Mammary epithelial cell (primary cell): ENCODE measurements at regions of chr7 and their contacts with region 1.

Region 1: DNA sequence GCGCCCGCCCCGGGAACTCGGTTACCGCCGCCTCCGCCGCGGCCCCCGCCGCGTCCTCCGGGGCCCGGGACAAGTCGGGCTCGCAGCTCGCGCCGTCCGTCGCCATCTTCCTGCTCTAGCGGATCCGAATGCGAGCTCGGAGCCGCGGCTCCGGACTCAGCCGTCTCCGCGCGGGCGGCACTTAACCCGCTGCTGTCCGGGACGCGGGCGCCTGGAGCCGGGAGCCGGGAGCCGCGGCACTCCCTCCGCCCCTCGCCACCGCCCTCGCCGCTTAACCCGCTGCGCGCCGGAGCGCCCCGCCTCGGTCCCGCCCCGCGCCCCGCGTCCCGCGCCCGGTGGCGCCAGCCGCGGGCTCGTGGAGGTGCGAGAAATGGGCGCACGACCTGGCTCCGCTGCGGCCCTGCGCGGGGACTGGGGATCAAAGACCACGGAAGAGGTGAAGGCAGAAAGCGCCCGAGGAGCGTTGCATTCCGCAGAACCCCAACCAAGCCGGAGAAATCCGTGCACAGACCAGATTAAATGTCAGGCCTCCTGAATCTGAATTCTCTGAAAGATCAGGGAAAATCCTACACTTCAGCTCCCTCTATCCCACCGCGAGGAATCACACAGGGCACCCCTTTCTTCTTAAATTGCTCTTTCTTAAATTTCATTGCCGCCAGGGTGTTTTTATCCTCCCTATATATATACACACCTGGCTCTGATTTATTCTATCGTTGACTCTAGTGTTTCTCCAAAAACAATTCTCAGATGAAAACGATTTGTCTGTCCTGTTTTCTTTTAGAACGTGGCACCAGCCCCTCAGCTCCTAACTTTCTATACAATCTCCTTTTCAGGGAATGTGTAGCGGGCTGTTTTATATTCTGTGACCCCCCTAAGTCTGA is at the start of gene CTTNBP2:
- DNase-seq: peak; percentile 30
- H3K4me3 ChIP-seq: peak within 1 kb of the TSS; percentile 46 to 62 (median 62)
- H3K27ac ChIP-seq: no peak within 1 kb of the TSS
- H3K4me1 ChIP-seq: peaks cover 10% of the 10 kb centered on the region
- H3K27me3 ChIP-seq: no peaks in the 10 kb centered on the region
- CTCF ChIP-seq: peak in 1 of 2 donors; percentile 8
- total RNA-seq, gene CTTNBP2: 0.16 to 8.0 TPM

Region 2: DNA sequence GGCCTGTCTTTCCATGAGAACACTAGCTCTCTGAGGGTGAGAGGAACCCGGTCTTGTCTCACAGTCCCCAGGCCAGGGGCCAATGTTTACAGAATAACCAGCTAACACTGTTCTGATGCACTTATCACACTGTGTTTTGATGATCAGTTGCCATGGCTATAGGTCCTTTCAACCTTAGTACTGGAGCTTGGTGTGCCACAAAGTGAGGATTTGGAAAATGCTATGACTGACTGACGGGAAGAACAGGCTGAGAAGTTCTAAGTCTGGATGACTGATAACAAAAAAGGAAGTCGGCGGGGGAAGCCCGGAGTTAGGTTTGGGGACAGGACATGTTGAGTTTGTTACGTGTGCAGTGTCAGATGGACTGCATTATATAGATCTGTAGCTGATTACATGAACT is 142.1 kb before region 1 on chr7:
- CTCF ChIA-PET with region 1: no interaction called
- dilution Hi-C with region 1: no loop called
- in situ Hi-C with region 1: no loop called
- intact Hi-C with region 1: loop called (anchors 1 kb)
- DNase-seq: no peak
- H3K4me3 ChIP-seq: no peak overlapping the region
- H3K27ac ChIP-seq: no peak overlapping the region
- H3K4me1 ChIP-seq: no peaks in the 10 kb centered on the region
- H3K27me3 ChIP-seq: no peaks in the 10 kb centered on the region
- CTCF ChIP-seq: no peak

Region 3: DNA sequence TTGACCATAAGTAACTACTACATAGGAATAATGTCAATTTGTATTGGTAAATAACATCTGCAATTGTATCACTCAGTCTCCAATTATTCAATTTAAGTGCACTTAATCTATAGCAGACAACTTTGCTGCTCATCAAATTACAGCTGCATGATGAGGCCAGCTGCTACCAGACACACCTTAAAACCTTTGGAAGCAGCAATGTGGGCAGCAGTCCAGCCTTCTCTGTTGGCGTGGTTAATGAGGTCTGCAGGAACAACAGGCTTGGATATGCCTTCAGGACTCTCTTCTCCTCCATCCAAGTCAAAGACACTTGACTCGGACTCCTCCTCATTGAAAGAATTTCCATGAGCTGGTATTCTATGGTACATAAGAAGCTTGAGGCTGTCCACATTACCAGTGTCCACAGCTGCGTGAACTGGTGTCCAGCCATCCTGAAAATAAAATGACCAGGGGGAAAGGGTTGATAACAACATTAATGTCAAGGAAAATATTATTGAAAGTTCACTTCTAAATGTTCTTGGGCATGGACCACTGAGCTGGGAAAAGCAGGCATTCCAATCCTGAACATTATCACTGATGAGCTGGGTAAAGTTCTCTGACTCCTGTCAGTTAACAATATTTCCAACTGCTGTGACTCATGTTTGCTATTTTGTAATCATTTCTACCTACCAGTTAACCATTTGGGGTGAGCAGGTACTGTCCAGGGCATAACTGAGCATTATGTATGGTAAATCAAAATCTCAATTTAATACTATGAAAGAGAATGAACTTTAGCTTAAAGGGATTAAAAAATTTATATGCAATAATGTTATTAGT is 96.0 kb before region 1 on chr7:
- CTCF ChIA-PET with region 1: no interaction called
- dilution Hi-C with region 1: no loop called
- in situ Hi-C with region 1: no loop called
- intact Hi-C with region 1: loop called (anchors 10 kb)
- DNase-seq: peak; percentile 31
- H3K4me3 ChIP-seq: no peak overlapping the region
- H3K27ac ChIP-seq: no peak overlapping the region
- H3K4me1 ChIP-seq: peaks cover 11% of the 10 kb centered on the region
- H3K27me3 ChIP-seq: no peaks in the 10 kb centered on the region
- CTCF ChIP-seq: no peak

Region 4: GRCh38 chr7:117975476-117975875 is 101.9 kb after region 1 on chr7:
- CTCF ChIA-PET with region 1: interaction called, 16 read pairs
- dilution Hi-C with region 1: loop called (anchors 5 kb)
- in situ Hi-C with region 1: no loop called
- intact Hi-C with region 1: no loop called
- DNase-seq: no peak
- H3K4me3 ChIP-seq: no peak overlapping the region
- H3K27ac ChIP-seq: no peak overlapping the region
- H3K4me1 ChIP-seq: no peaks in the 10 kb centered on the region
- H3K27me3 ChIP-seq: no peaks in the 10 kb centered on the region
- CTCF ChIP-seq: no peak

Region 5: DNA sequence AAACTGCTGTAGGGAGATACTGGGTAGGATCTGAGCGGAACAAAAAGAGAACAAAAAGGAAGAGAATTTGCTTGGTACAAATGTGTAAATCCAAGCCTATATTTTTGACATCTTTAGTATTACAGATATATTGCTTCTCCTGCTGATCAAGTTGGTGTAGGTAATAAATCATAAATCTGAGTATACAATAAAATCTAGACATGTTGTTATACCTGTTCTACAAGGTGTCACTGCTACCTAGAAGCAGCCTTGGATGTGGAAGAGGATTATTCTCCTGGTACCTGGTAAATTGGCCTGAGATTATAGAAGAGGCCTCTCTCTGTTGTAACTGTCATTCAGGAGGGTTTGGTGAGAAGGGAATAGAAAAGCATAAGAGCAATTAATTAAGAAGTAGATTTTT is 220.5 kb after region 1 on chr7:
- CTCF ChIA-PET with region 1: interaction called, 3 read pairs
- dilution Hi-C with region 1: no loop called
- in situ Hi-C with region 1: no loop called
- intact Hi-C with region 1: loop called (anchors 5 kb)
- DNase-seq: no peak
- H3K4me3 ChIP-seq: no peak overlapping the region
- H3K27ac ChIP-seq: no peak overlapping the region
- H3K4me1 ChIP-seq: peaks cover 4% of the 10 kb centered on the region
- H3K27me3 ChIP-seq: no peaks in the 10 kb centered on the region
- CTCF ChIP-seq: no peak

Region 6: GRCh38 chr7:118104812-118105441 is 231.4 kb after region 1 on chr7:
- CTCF ChIA-PET with region 1: no interaction called
- dilution Hi-C with region 1: no loop called
- in situ Hi-C with region 1: loop called in 1 of 2 experiments (anchors 25 kb)
- intact Hi-C with region 1: no loop called
- DNase-seq: peak; percentile 33
- H3K4me3 ChIP-seq: no peak overlapping the region
- H3K27ac ChIP-seq: no peak overlapping the region
- H3K4me1 ChIP-seq: no peaks in the 10 kb centered on the region
- H3K27me3 ChIP-seq: no peaks in the 10 kb centered on the region
- CTCF ChIP-seq: peak; percentile 61 to 70